Activated CD4-positive, alpha-beta T cell treated with anti-CD3 and anti-CD28 coated beads for 36 hours (primary cell): ENCODE measurements at regions of chr1 and their contacts with region 1.

Region 1: GRCh38 chr1:28886731-28887418 is 27.5 kb upstream of the EPB41 start:
- DNase-seq: peak; percentile 95
- ATAC-seq: peak; percentile 77
- H3K4me3 Mint-ChIP-seq: peak overlapping the region; percentile 90
- H3K27ac Mint-ChIP-seq: peak overlapping the region; percentile 88
- H3K4me1 Mint-ChIP-seq: peaks cover 43% of the 10 kb centered on the region
- H3K27me3 Mint-ChIP-seq: no peaks in the 10 kb centered on the region

Region 2: DNA sequence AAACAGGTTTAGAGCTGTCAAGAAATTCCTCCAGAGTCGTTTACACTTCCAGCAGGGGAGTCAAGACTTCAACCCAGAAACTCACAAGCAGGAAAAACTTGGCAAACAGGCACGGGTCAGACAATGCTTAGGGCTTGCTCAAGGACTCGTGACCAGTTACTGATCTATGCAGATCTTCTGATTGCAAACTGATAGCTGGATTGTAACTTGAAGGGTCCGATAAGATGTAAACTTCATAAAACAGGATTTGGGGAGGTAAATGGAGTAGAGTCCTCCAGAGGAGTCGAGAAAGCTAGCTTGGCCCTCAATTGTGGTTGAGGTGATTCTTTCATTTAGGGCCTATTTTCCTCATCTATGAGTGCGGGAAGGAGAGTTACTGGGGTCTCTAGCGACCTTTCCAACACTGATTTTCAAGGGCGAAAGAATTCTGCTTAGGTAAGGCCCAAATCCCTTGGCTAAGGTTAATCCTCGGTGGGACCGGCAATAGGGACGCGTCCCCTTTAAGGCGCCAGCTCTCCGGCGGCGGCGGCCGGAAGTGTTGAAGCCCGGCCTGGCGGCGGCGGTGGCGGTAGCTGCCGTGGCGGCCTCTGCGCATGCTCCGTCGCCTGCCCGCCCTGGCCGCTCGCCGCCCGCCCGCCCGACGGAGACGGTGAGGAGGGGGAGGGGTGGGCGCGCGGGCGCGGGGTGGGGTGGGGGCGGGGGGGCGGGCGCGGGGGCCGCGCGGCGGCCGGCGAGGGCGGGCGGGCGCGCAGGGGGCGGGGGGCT is 218.5 kb before region 1 on chr1 and contains the start of gene GMEB1:
- CTCF ChIA-PET with region 1: no interaction called
- POLR2A ChIA-PET with region 1: no interaction called
- intact Hi-C with region 1: loop called in 1 of 2 experiments (anchors 1 kb)
- DNase-seq: peak; percentile 93
- ATAC-seq: peak; percentile 72
- H3K4me3 Mint-ChIP-seq: peak within 1 kb of the TSS; percentile 84
- H3K27ac Mint-ChIP-seq: peak within 1 kb of the TSS; percentile 99
- H3K4me1 Mint-ChIP-seq: peaks cover 11% of the 10 kb centered on the region
- H3K27me3 Mint-ChIP-seq: no peaks in the 10 kb centered on the region
- total RNA-seq, gene GMEB1: 20.3 to 25.4 TPM

Region 3: GRCh38 chr1:28926629-28927265 is 39.9 kb after region 1 on chr1:
- CTCF ChIA-PET with region 1: interaction called, 3 read pairs
- POLR2A ChIA-PET with region 1: no interaction called
- intact Hi-C with region 1: loop called in 1 of 2 experiments (anchors 5 kb)
- DNase-seq: peak; percentile 24
- ATAC-seq: peak; percentile 89
- H3K4me3 Mint-ChIP-seq: peak overlapping the region; percentile 53
- H3K27ac Mint-ChIP-seq: peak overlapping the region; percentile 94
- H3K4me1 Mint-ChIP-seq: peaks cover 56% of the 10 kb centered on the region
- H3K27me3 Mint-ChIP-seq: no peaks in the 10 kb centered on the region

Region 4: DNA sequence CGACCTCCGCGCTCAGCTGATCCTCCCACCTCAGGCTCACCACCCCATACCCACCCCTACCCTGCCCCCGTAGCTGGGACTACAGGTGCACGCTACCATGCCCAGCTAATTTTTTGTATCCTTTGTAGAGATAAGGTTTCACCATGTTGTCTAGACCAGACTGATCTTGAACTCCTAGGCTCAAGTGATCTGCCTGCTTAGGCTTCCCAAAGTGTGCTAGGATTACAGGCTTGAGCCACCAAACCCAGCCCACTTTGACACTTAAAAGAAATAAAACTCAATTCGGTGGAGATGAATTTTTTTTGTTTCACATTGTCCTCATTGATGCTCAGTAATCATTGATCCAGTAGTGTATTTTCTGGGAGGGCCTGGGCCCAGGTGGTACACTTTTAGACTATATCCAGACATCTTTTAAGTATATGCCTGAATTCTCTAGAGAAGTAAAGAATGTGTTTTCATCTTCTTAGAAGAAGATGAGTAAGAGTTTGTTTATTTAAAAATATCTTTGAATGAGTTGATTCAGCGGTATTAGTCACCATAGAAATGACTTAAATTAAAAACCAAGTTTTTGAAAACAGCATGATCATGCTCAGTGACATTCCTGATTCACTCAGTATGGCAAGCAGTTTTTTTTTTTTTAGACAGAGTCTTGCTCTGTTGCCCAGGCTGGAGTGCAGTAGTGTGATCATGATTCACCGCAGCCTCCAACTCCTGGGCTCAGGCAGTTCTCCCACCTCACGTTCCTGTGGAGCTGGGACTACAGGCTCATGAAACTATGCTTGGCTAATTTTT is 85.3 kb after region 1 on chr1:
- CTCF ChIA-PET with region 1: interaction called, 5 read pairs
- POLR2A ChIA-PET with region 1: no interaction called
- intact Hi-C with region 1: loop called in 1 of 2 experiments (anchors 2 kb)
- DNase-seq: peak; percentile 46
- ATAC-seq: peak; percentile 89
- H3K4me3 Mint-ChIP-seq: peak overlapping the region; percentile 27
- H3K27ac Mint-ChIP-seq: peak overlapping the region; percentile 81
- H3K4me1 Mint-ChIP-seq: peaks cover 61% of the 10 kb centered on the region
- H3K27me3 Mint-ChIP-seq: no peaks in the 10 kb centered on the region

Region 5: DNA sequence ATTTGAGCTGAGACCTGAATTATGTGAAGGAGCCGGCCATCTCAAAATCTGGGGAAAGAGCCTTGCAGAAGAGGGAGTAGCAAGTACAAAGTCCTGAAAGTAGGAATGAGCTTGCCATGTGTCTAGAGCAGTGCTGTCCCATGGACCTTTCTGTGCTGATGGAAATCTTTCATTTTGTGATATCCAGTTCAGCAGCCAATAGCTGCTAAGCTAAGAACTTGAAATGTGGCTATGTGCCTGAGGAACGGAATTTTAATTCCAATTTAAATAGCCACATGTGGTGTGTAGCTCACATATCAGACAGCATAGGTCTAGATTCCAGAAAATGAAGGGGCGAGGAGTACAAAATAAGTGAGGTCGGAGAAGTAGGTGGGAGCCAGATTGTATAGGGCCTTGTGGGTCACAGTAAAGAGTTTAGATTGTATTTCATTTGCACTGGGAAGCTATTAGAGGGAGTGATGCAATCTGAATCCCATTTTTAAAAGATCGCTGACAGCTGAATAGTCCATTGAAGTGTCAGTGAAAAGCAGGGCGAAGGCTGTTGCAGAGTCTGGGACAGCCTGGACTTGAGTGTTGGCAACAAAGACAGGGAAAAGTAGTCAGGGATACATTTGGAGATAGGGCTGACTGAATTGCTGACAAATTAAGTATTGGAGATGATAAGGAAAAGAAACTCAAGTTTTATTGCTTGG is 156.5 kb after region 1 on chr1:
- CTCF ChIA-PET with region 1: interaction called, 11 read pairs
- POLR2A ChIA-PET with region 1: no interaction called
- intact Hi-C with region 1: no loop called
- DNase-seq: no peak
- ATAC-seq: no peak
- H3K4me3 Mint-ChIP-seq: no peak overlapping the region
- H3K27ac Mint-ChIP-seq: peak overlapping the region; percentile 70
- H3K4me1 Mint-ChIP-seq: peaks cover 40% of the 10 kb centered on the region
- H3K27me3 Mint-ChIP-seq: no peaks in the 10 kb centered on the region

Region 6: GRCh38 chr1:29124366-29125236 is 237.7 kb after region 1 on chr1:
- CTCF ChIA-PET with region 1: interaction called, 12 read pairs
- POLR2A ChIA-PET with region 1: interaction called, 4 read pairs
- intact Hi-C with region 1: loop called (anchors 1 to 5 kb)
- DNase-seq: peak; percentile 79
- ATAC-seq: peak; percentile 62
- H3K4me3 Mint-ChIP-seq: peak overlapping the region; percentile 65
- H3K27ac Mint-ChIP-seq: no peak overlapping the region
- H3K4me1 Mint-ChIP-seq: peaks cover 2% of the 10 kb centered on the region
- H3K27me3 Mint-ChIP-seq: peaks cover 12% of the 10 kb centered on the region

Region 7: GRCh38 chr1:29202584-29203340 is 315.9 kb after region 1 on chr1:
- CTCF ChIA-PET with region 1: interaction called, 27 read pairs
- POLR2A ChIA-PET with region 1: no interaction called
- intact Hi-C with region 1: loop called (anchors 1 kb)
- DNase-seq: peak; percentile 96
- ATAC-seq: peak; percentile 95
- H3K4me3 Mint-ChIP-seq: no peak overlapping the region
- H3K27ac Mint-ChIP-seq: no peak overlapping the region
- H3K4me1 Mint-ChIP-seq: peaks cover 6% of the 10 kb centered on the region
- H3K27me3 Mint-ChIP-seq: no peaks in the 10 kb centered on the region